ENCODE measurements at regions of chr11 and their contacts with region 1.

Region 1: GRCh38 chr11:1389103-1389931 is 417 bp upstream of the BRSK2 start:
- DNase-seq: peak; percentile 99
- H3K4me3 ChIP-seq: peak overlapping the region; percentile 31 to 59
- H3K27ac ChIP-seq: peak overlapping the region; percentile 23 to 70
- H3K4me1 ChIP-seq: peaks cover 18% of the 10 kb centered on the region
- H3K27me3 ChIP-seq: no peaks in the 10 kb centered on the region
- CTCF ChIP-seq: peak in 1 of 3 experiments; percentile 13
- POLR2A ChIP-seq: no peak

Region 2: DNA sequence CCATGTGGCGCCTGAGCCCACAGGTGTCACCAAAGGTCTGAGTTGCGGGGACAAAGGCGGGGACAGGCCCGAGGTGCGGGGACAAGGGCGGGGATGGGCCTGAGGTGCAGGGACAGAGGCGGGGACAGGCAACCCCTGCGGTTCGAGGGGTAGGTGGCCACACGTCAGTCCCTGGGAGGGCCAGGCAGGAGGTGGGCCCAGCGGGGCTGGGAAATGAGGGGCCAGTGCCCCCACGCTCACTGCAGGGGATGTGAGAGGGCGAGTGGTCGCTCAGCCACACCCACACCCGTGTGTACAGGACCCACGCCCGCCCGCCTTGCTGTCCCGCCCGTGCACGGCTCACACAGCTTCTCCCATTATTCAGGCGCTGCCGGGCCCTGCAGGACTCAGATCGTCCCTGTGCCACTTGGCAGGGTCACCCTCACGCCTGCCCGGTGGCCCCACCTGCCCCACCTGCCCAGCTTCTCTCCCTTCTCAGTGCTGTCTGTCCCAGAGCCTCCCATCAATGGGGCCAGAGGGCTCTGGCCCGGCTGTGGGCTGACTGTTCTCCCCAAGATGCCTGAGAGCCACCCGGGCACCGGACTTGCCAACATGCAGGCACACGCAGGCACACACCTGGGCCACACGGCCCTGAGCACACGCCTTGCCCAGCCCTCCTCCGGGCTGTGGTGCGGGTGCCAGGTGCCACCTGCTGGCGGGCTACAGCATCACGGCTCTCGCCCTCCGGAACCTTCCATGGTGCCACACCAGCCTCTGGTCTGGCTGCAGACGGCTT is 338.5 kb before region 1 on chr11:
- intact Hi-C with region 1: no loop called
- DNase-seq: peak; percentile 77
- H3K4me3 ChIP-seq: no peak overlapping the region
- H3K27ac ChIP-seq: no peak overlapping the region
- H3K4me1 ChIP-seq: no peaks in the 10 kb centered on the region
- H3K27me3 ChIP-seq: no peaks in the 10 kb centered on the region
- CTCF ChIP-seq: peak; percentile 82 to 86 (median 86)
- POLR2A ChIP-seq: no peak

Region 3: GRCh38 chr11:1276041-1276790 is 113.1 kb before region 1 on chr11:
- intact Hi-C with region 1: no loop called
- DNase-seq: no peak
- H3K4me3 ChIP-seq: no peak overlapping the region
- H3K27ac ChIP-seq: no peak overlapping the region
- H3K4me1 ChIP-seq: no peaks in the 10 kb centered on the region
- H3K27me3 ChIP-seq: no peaks in the 10 kb centered on the region
- CTCF ChIP-seq: no peak
- POLR2A ChIP-seq: no peak

Region 4: GRCh38 chr11:1298695-1299492 is 90.4 kb before region 1 on chr11:
- intact Hi-C with region 1: no loop called
- DNase-seq: peak; percentile 65
- H3K4me3 ChIP-seq: no peak overlapping the region
- H3K27ac ChIP-seq: no peak overlapping the region
- H3K4me1 ChIP-seq: peaks cover 43% of the 10 kb centered on the region
- H3K27me3 ChIP-seq: no peaks in the 10 kb centered on the region
- CTCF ChIP-seq: no peak
- POLR2A ChIP-seq: no peak

Region 5: GRCh38 chr11:1309498-1310317 is 79.6 kb before region 1 on chr11 and contains the start of gene TOLLIP:
- intact Hi-C with region 1: loop called (anchors 10 kb)
- DNase-seq: peak; percentile 94
- H3K4me3 ChIP-seq: peak within 1 kb of the TSS; percentile 82 to 90
- H3K27ac ChIP-seq: peak within 1 kb of the TSS; percentile 91 to 95
- H3K4me1 ChIP-seq: peaks cover 36% of the 10 kb centered on the region
- H3K27me3 ChIP-seq: no peaks in the 10 kb centered on the region
- CTCF ChIP-seq: peak in 2 of 3 experiments; percentile 35 to 37
- POLR2A ChIP-seq: peak; percentile 66
- total RNA-seq, gene TOLLIP: 197 to 220 TPM

Measured in testis (tissue), 5 donors.